Calu3 (cell line): ENCODE measurements at regions of chr10 and their contacts with region 1.

Region 1: GRCh38 chr10:80472234-80473095 is 18.4 kb downstream of the TSPAN14 start:
- DNase-seq: no peak
- H3K4me3 Mint-ChIP-seq: no peak overlapping the region
- H3K27ac Mint-ChIP-seq: peak overlapping the region; percentile 50
- H3K4me1 Mint-ChIP-seq: peaks cover 74% of the 10 kb centered on the region
- H3K27me3 Mint-ChIP-seq: no peaks in the 10 kb centered on the region
- CTCF ChIP-seq: no peak

Region 2: GRCh38 chr10:80460399-80461207 is 11.9 kb before region 1 on chr10:
- CTCF ChIA-PET with region 1: interaction called, 11 read pairs
- intact Hi-C with region 1: no loop called
- DNase-seq: peak; percentile 95
- H3K4me3 Mint-ChIP-seq: peak overlapping the region; percentile 58
- H3K27ac Mint-ChIP-seq: peak overlapping the region; percentile 94
- H3K4me1 Mint-ChIP-seq: peaks cover 89% of the 10 kb centered on the region
- H3K27me3 Mint-ChIP-seq: no peaks in the 10 kb centered on the region
- CTCF ChIP-seq: no peak

Region 3: GRCh38 chr10:81152656-81153055 is 680.2 kb after region 1 on chr10:
- CTCF ChIA-PET with region 1: no interaction called
- intact Hi-C with region 1: no loop called
- DNase-seq: no peak
- H3K4me3 Mint-ChIP-seq: no peak overlapping the region
- H3K27ac Mint-ChIP-seq: no peak overlapping the region
- H3K4me1 Mint-ChIP-seq: no peaks in the 10 kb centered on the region
- H3K27me3 Mint-ChIP-seq: no peaks in the 10 kb centered on the region
- CTCF ChIP-seq: no peak